ENCODE measurements at regions of chr20 and their contacts with region 1.

Region 1: DNA sequence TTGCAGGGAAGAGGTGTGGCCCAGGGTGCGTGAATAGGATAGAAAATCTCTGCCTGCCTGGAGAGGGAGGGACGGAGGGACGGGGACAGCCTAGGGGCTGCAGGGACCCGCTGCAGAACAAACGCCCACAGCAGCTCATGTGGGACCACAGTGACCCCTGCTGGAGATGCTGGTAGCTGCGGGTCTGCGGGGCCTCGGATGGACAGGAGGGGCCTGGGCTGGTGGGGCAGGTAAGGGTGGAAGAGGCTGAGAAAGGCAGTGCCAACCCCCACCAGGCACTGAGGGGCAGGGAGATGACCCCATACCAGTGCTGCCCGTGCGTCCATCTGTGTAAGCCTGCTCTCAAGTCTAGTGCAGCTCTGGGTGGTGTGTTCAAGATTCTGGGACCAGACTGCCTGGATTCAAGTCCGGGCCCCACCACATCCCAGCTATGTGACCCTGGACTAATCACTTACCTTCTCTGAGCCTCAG is 39.4 kb downstream of the KIAA1755 start:
- DNase-seq: no peak
- H3K4me3 ChIP-seq: no peak overlapping the region
- H3K27ac ChIP-seq: no peak overlapping the region
- H3K4me1 ChIP-seq: peaks cover 2% of the 10 kb centered on the region
- H3K27me3 ChIP-seq: no peaks in the 10 kb centered on the region
- CTCF ChIP-seq: peak; percentile 37 to 89 (median 79)
- POLR2A ChIP-seq: peak; percentile 11

Region 2: DNA sequence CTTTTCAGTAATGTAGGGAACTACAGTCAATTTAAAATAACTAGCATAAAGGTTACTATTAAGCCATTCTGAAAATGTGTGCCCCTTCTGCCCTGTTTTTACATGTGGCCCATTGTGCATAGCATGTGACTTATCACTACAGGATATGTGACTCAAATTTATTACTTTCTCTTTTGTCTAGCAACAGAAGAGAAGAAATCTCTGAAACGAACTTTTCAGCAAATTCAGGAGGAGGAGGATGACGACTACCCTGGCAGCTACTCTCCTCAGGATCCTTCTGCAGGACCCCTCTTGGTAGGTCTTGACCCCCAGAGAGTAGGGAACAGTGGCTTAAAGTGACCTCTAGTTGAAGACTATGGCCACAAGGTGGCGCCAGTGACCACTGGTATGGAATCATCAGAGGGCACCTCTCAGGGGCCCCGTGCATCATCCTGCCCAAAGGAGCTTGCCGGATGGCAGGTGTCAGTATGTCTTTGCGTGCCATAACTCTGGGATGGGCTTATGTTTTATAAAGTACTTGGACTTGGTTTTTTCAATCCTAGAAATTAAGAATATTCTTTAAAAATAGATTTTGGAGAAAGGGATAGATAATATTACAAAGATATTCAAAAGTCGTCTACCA is 163.7 kb before region 1 on chr20:
- intact Hi-C with region 1: loop called (anchors 2 kb)
- DNase-seq: peak; percentile 82
- H3K4me3 ChIP-seq: no peak overlapping the region
- H3K27ac ChIP-seq: no peak overlapping the region
- H3K4me1 ChIP-seq: no peaks in the 10 kb centered on the region
- H3K27me3 ChIP-seq: no peaks in the 10 kb centered on the region
- CTCF ChIP-seq: peak; percentile 84 to 92 (median 86)
- POLR2A ChIP-seq: no peak